Ascending aorta (tissue), 2 donors: ENCODE measurements at regions of chr7 and their contacts with region 1.

Region 1: GRCh38 chr7:55132890-55133551 is 114.2 kb downstream of the EGFR start:
- DNase-seq: peak in 1 of 2 donors; percentile 87
- H3K4me3 ChIP-seq: no peak overlapping the region
- H3K27ac ChIP-seq: peak overlapping the region; percentile 89 to 93
- H3K4me1 ChIP-seq: peaks cover 27 to 63% of the 10 kb centered on the region in 2 donors
- H3K27me3 ChIP-seq: no peaks in the 10 kb centered on the region
- CTCF ChIP-seq: no peak

Region 2: DNA sequence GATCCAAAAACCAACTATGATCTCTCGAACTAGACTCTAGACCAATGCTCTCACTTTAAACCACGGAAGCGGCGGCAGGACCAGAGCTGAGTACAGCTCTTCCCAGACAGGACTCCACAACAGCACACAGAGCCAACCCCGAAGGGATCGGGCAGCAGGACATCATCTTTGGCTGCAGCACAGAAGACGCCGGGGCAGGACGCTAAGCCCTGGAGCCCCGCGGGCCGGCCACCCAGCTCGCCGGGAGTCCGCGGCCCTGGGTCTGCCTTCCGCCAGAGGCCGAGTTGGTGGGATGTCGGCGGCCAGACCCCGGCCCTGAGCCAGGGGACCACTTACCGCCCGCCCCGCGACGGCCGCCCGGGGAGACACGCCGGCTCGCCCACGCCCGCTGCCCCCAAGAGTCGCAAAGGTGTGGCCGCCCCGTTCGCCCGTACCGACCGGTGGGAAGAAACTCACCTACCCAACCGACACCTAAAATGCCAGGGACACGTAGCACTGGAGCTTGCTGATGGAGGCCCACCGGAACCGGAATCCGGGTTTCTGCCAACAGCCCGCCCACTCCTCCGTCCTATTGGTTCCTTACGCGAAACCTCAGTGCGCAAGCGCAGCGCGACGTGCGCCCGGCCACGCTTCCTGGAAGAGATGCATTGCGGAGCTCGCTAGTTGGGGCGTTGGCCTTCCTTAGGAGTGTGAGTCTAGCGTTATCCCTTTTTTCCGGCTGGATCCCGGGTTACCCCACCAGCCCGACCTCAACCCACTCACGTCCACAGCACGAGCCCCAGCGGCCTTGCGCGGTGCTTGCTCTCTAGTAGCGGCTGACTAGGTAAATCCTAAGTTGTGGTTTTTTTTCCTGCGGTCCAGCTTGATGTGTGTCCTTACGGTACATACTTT is 374.1 kb before region 1 on chr7 and contains the start of gene SEC61G:
- intact Hi-C with region 1: loop called (anchors 5 kb)
- DNase-seq: peak; percentile 89 to 98
- H3K4me3 ChIP-seq: peak within 1 kb of the TSS; percentile 78 to 92
- H3K27ac ChIP-seq: peak within 1 kb of the TSS; percentile 84 to 86
- H3K4me1 ChIP-seq: peaks cover 0 to 19% of the 10 kb centered on the region in 2 donors
- H3K27me3 ChIP-seq: no peaks in the 10 kb centered on the region
- CTCF ChIP-seq: peak in 1 of 3 experiments; percentile 12
- total RNA-seq, gene SEC61G: 166 TPM

Region 3: GRCh38 chr7:54839538-54840213 is 293.3 kb before region 1 on chr7:
- intact Hi-C with region 1: loop called (anchors 5 kb)
- DNase-seq: peak in 1 of 2 donors; percentile 84
- H3K4me3 ChIP-seq: no peak overlapping the region
- H3K27ac ChIP-seq: no peak overlapping the region
- H3K4me1 ChIP-seq: peaks cover 0 to 30% of the 10 kb centered on the region in 2 donors
- H3K27me3 ChIP-seq: no peaks in the 10 kb centered on the region
- CTCF ChIP-seq: peak; percentile 56 to 70 (median 68)

Region 4: DNA sequence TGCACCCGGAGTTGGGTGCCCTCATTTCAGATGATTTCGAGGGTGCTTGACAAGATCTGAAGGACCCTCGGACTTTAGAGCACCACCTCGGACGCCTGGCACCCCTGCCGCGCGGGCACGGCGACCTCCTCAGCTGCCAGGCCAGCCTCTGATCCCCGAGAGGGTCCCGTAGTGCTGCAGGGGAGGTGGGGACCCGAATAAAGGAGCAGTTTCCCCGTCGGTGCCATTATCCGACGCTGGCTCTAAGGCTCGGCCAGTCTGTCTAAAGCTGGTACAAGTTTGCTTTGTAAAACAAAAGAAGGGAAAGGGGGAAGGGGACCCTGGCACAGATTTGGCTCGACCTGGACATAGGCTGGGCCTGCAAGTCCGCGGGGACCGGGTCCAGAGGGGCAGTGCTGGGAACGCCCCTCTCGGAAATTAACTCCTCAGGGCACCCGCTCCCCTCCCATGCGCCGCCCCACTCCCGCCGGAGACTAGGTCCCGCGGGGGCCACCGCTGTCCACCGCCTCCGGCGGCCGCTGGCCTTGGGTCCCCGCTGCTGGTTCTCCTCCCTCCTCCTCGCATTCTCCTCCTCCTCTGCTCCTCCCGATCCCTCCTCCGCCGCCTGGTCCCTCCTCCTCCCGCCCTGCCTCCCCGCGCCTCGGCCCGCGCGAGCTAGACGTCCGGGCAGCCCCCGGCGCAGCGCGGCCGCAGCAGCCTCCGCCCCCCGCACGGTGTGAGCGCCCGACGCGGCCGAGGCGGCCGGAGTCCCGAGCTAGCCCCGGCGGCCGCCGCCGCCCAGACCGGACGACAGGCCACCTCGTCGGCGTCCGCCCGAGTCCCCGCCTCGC is 114.4 kb before region 1 on chr7 and contains the start of gene EGFR:
- intact Hi-C with region 1: loop called (anchors 2 kb)
- DNase-seq: peak; percentile 29 to 91
- H3K4me3 ChIP-seq: peak within 1 kb of the TSS; percentile 88 to 98
- H3K27ac ChIP-seq: peak within 1 kb of the TSS; percentile 97 to 98
- H3K4me1 ChIP-seq: peaks cover 4 to 38% of the 10 kb centered on the region in 2 donors
- H3K27me3 ChIP-seq: no peaks in the 10 kb centered on the region
- CTCF ChIP-seq: no peak
- total RNA-seq, gene EGFR: 33.8 TPM

Region 5: DNA sequence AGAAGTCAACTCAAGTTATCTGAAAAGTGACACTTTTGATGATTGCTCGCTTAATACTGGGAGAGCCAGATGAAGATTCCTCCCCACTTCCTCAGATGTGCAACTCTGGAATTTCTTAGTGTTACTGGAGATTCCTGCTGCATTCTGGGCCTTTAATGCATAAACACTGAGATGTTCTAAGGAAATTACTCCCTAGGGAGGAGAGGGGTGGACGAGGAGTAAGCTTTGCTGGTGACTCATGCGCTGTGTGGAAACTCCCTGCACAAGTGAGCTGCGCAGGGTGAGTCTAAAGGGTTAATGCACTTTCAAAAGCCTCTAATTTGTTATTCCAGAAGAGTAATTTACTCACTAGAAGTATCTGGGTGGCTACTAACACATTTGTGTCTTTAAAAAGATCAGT is 67.9 kb before region 1 on chr7:
- intact Hi-C with region 1: loop called (anchors 2 kb)
- DNase-seq: no peak
- H3K4me3 ChIP-seq: peak overlapping the region in 1 of 2 donors; percentile 9
- H3K27ac ChIP-seq: peak overlapping the region; percentile 73 to 77
- H3K4me1 ChIP-seq: peaks cover 4 to 38% of the 10 kb centered on the region in 2 donors
- H3K27me3 ChIP-seq: no peaks in the 10 kb centered on the region
- CTCF ChIP-seq: no peak

Region 6: DNA sequence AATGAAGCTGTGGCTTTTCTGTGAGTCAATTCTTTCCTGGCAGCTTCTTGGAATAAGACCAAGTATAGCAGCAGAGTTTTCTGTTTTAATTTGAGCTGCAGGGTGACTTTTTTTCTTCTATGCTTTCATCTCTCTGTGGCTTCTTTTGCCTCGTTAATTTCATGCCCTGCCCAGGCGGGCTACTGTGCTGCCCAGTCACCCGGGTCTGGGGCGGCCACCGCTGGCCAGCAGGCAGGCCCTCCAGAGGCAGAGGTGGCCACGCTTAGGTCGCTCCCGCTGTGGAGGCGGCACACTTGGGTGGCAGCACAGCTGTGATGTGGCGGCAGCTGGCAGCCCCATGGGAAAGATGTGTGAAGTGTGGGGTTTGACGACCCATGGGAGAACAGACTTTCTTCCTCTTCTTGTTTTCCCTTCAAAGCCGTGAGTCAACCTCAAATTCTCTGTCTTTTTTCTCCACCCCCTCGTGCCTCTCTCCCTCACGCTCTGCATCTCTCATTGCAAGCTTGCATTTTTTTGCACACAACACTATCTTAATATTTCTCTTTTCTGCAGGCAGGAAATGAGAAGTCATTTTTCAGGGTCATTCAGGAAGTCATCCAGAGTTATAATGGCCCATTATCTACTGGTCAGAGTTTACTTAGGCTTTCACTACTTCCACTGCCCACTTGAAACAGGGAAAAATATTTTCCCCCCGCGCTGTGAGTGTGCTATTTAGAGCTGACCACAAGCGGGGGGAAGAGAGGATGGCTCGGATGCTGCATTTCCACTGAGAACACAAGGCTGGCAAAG is 46.4 kb before region 1 on chr7:
- intact Hi-C with region 1: loop called (anchors 5 kb)
- DNase-seq: no peak
- H3K4me3 ChIP-seq: peak overlapping the region; percentile 35 to 53
- H3K27ac ChIP-seq: peak overlapping the region; percentile 15 to 73
- H3K4me1 ChIP-seq: peaks cover 5 to 32% of the 10 kb centered on the region in 2 donors
- H3K27me3 ChIP-seq: no peaks in the 10 kb centered on the region
- CTCF ChIP-seq: no peak

Region 7: DNA sequence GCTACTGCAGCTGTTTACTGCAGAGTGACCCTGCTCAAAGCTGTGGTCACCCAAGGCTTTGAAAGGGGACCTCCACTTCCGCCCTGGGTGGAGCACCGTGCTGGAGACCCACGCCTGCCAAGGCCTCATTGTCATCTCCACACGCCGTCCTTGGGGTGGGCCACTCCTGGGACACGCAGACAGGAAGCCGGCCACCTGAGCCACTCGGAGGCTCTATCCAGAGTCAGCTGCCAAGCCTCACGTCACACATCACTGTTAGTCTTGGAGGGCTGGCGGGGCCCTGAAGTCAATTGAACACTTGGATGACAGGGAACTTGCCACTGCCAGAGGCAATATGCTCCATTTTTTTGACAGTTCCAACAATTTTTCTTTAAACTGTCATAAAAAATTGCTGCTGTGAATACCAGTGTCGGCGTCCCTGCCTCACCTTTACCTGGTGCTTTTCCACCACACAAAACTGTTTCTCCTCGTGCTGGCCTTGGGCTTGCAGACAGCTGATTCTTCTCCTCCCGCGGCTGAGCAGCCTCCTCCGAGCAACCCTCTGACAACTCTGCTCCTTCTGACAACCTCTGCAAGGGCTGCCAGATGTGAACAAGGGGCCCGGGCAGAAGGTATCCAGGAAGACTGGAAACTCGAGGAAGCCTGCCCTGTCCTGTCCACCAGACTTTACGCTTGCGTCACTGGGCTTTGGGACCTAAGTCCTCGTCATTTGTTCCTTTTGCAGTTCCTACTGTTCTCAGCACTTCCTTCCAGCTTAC is 32.3 kb before region 1 on chr7:
- intact Hi-C with region 1: loop called (anchors 2 kb)
- DNase-seq: peak in 1 of 2 donors; percentile 87
- H3K4me3 ChIP-seq: peak overlapping the region; percentile 12 to 35
- H3K27ac ChIP-seq: peak overlapping the region; percentile 41 to 46
- H3K4me1 ChIP-seq: peaks cover 4 to 27% of the 10 kb centered on the region in 2 donors
- H3K27me3 ChIP-seq: no peaks in the 10 kb centered on the region
- CTCF ChIP-seq: no peak